Ascending aorta (tissue), 2 donors: ENCODE measurements at regions of chr3 and their contacts with region 1.

Region 1: GRCh38 chr3:108489771-108490170 is 20.6 kb downstream of the MYH15 start:
- DNase-seq: no peak
- H3K4me3 ChIP-seq: no peak overlapping the region
- H3K27ac ChIP-seq: no peak overlapping the region
- H3K4me1 ChIP-seq: no peaks in the 10 kb centered on the region
- H3K27me3 ChIP-seq: no peaks in the 10 kb centered on the region
- CTCF ChIP-seq: peak; percentile 63 to 74 (median 69)

Region 2: DNA sequence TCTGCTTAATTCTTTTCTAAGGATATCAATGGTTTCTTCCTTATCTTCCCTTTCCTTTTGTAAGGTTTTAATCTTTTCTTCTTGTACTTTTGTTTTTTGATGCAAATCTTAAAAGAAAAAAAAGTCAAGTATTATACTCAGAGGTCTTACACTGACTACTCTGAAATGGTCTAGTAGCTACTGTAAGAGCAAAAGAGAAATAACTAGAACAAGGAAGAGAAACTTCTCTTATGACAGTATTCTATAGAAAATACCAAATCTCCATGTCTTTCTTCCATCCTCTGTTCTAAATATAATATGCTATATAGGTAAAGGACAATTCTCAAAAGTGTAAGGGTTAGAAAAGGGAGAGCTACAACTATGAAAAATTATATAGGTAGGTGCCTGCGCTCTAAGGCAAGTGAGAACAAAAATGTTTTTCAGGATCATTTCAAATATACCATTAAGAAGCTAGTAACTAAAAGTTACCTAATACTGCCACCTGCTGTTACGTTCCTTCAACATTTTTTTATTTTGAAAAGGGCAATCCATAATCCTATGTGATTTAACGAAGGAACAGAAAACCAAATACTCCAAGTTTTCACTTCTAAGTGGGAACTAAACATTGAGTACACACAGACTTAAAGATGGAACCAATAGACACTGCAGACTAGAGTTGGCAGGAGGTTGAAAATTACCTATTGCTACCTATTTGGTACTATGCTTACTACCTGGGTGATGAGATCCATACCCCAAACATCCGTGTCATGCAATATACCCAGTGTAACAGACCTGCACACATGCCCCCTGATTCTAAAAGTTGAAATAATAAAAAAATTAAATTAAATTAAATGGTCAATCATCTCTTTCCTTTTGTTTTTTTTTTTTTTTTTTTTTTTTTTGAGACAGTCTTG is 62.7 kb after region 1 on chr3:
- intact Hi-C with region 1: loop called (anchors 1 kb)
- DNase-seq: no peak
- H3K4me3 ChIP-seq: no peak overlapping the region
- H3K27ac ChIP-seq: no peak overlapping the region
- H3K4me1 ChIP-seq: no peaks in the 10 kb centered on the region
- H3K27me3 ChIP-seq: no peaks in the 10 kb centered on the region
- CTCF ChIP-seq: peak in 2 of 3 experiments; percentile 23 to 59